ENCODE measurements at regions of chr15 and their contacts with region 1.

Region 1: GRCh38 chr15:52078876-52079700 is 33.5 kb downstream of the BCL2L10 start:
- DNase-seq: peak; percentile 88
- H3K4me3 ChIP-seq: no peak overlapping the region
- H3K27ac ChIP-seq: no peak overlapping the region
- H3K4me1 ChIP-seq: peaks cover 0 to 6% (median 3%) of the 10 kb centered on the region in 4 donors
- H3K27me3 ChIP-seq: no peaks in the 10 kb centered on the region
- CTCF ChIP-seq: peak; percentile 59 to 77 (median 71)
- EP300 ChIP-seq: no peak
- POLR2A ChIP-seq: no peak

Region 2: GRCh38 chr15:51888593-51889195 is 190.4 kb before region 1 on chr15:
- intact Hi-C with region 1: loop called (anchors 5 kb)
- DNase-seq: no peak
- H3K4me3 ChIP-seq: no peak overlapping the region
- H3K27ac ChIP-seq: no peak overlapping the region
- H3K4me1 ChIP-seq: peaks cover 0 to 17% (median 14%) of the 10 kb centered on the region in 4 donors
- H3K27me3 ChIP-seq: no peaks in the 10 kb centered on the region
- CTCF ChIP-seq: peak in 3 of 4 experiments; percentile 39 to 72 (median 63)
- EP300 ChIP-seq: no peak
- POLR2A ChIP-seq: no peak

Region 3: DNA sequence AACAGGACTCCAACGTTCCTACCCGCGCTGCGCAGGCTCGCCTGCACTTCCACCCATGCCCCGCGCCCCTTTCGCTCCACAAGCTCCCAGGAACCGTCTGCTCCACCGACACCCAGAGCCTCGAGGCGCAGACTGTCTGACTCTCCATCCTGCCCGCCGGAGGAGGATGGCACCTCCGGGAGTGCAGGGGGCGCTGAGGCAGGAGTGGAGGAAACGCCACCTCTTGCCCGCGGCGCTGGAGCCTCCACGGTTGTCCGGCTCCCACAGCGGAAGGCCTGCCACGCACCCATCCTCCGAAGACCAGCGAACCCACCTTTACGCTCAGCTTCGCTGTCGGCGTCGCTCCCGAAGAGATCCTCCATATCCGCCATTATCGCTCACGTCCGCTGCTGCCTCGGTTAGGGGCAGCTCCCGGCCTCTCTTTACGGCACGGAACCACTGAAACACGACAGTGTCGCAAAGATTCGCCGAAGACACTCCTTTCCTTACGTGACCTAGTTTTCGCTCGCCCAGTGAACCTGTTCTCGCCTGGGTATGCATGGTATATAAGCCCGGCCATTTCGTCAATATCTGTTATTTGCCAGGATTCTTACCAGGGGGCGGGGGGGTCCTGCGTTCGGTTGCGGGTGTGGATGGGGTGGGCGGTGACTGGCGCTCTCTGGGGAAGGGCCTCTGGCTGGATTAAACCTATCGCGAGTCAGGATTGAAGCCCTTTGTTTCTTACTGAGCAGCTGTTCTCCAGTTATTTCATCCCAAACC is 107.5 kb before region 1 on chr15 and contains the start of gene LEO1:
- intact Hi-C with region 1: loop called (anchors 2 kb)
- DNase-seq: peak; percentile 96
- H3K4me3 ChIP-seq: peak within 1 kb of the TSS; percentile 60 to 75 (median 74)
- H3K27ac ChIP-seq: peak within 1 kb of the TSS; percentile 86 to 90 (median 88)
- H3K4me1 ChIP-seq: peaks cover 0 to 18% (median 11%) of the 10 kb centered on the region in 4 donors
- H3K27me3 ChIP-seq: no peaks in the 10 kb centered on the region
- CTCF ChIP-seq: peak; percentile 35 to 44 (median 36)
- EP300 ChIP-seq: no peak
- POLR2A ChIP-seq: peak; percentile 43 to 49
- total RNA-seq, gene LEO1: 7.4 to 15.3 (median 13.0) TPM

Region 4: GRCh38 chr15:52227456-52227855 is 148.4 kb after region 1 on chr15:
- intact Hi-C with region 1: loop called (anchors 10 kb)
- DNase-seq: peak; percentile 76
- H3K4me3 ChIP-seq: no peak overlapping the region
- H3K27ac ChIP-seq: no peak overlapping the region
- H3K4me1 ChIP-seq: no peaks in the 10 kb centered on the region
- H3K27me3 ChIP-seq: no peaks in the 10 kb centered on the region
- CTCF ChIP-seq: peak; percentile 51 to 82 (median 64)
- EP300 ChIP-seq: no peak
- POLR2A ChIP-seq: no peak